AG04449 (cell line): ENCODE measurements at regions of chr2 and their contacts with region 1.

Region 1: GRCh38 chr2:216519154-216519762 is 20.6 kb downstream of the RPL37A start:
- DNase-seq: no peak
- H3K4me3 ChIP-seq: no peak overlapping the region
- CTCF ChIP-seq: peak; percentile 67

Region 2: GRCh38 chr2:216339808-216340631 is 179.2 kb before region 1 on chr2:
- CTCF ChIA-PET with region 1: no interaction called
- POLR2A ChIA-PET with region 1: no interaction called
- DNase-seq: no peak
- H3K4me3 ChIP-seq: no peak overlapping the region
- CTCF ChIP-seq: peak; percentile 36

Region 3: DNA sequence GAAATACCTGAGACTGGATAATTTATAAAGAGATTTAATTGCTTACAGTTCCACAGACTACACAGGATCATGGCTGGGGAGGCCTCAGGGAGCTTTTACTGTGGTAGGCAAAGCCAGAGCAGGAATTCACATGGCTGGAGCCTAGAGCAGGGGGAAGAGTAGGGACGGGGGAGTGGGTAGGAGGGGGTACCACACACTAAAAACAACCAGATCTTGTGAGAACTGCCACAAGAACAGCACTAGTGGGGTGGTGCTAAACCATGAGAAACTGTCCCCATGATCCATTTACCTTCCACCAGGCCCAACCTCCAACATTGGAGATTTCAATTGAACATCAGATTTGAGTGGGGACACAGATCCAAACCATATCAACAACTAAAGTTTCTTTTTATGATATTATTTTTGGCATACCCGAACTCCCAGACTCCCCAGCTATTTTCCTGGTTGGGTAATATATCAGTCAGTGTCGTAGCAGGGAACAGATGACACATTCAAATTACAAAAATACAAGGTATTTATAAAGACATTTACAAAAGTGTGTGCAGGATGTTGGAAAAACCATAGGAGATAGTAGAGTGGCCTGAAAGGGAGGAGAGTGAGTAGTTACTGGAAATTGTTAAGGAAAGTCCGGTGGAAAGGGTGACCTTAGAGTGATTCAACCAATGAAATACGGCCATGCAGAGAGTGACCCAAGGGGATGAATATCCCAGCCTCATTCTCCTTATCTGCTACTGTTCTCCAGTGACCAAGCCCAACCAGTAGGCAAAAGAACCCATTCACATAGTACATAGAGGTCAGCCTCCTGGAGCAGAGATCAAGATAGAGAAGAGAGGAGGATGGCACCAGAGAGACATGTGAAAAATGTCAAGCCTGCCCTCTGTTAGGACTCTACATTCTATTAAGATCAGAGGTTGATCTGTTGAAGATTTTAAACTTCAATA is 11.8 kb before region 1 on chr2:
- CTCF ChIA-PET with region 1: interaction called, 93 read pairs
- POLR2A ChIA-PET with region 1: interaction called, 4 read pairs
- DNase-seq: no peak
- H3K4me3 ChIP-seq: no peak overlapping the region
- CTCF ChIP-seq: no peak

Region 4: GRCh38 chr2:216546641-216547403 is 27.6 kb after region 1 on chr2:
- CTCF ChIA-PET with region 1: interaction called, 11 read pairs
- POLR2A ChIA-PET with region 1: no interaction called
- DNase-seq: no peak
- H3K4me3 ChIP-seq: no peak overlapping the region
- CTCF ChIP-seq: no peak

Region 5: DNA sequence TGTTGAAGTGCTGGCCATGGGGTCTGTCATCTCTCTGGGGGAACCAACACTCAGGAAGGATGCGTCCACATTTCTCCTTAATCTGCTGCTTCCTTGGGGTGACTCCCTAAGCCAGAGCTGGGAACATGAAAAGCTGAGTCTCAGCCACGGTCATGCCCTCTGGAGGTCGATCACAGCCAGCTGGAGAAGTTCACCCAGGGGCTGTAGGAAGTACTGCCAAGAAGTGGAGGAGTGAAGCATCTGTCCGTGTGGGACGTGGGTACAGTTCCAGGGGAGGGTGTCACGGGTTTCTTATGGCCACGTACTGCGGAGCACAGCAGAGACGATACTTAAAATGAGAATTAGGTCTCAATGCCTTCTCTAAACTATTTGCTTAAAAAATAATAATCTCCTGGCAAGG is 71.5 kb after region 1 on chr2:
- CTCF ChIA-PET with region 1: interaction called, 19 read pairs
- POLR2A ChIA-PET with region 1: no interaction called
- DNase-seq: no peak
- H3K4me3 ChIP-seq: no peak overlapping the region
- CTCF ChIP-seq: no peak

Region 6: GRCh38 chr2:216636551-216637450 is 117.5 kb after region 1 on chr2:
- CTCF ChIA-PET with region 1: interaction called, 36 read pairs
- POLR2A ChIA-PET with region 1: no interaction called
- DNase-seq: no peak
- H3K4me3 ChIP-seq: no peak overlapping the region; the same call in 1 of the 2 replicates
- CTCF ChIP-seq: no peak

Region 7: GRCh38 chr2:216680951-216681629 is 161.8 kb after region 1 on chr2:
- CTCF ChIA-PET with region 1: interaction called, 1,277 read pairs
- POLR2A ChIA-PET with region 1: no interaction called
- DNase-seq: no peak
- H3K4me3 ChIP-seq: no peak overlapping the region
- CTCF ChIP-seq: no peak

Region 8: GRCh38 chr2:216897561-216898203 is 378.4 kb after region 1 on chr2:
- CTCF ChIA-PET with region 1: no interaction called
- POLR2A ChIA-PET with region 1: no interaction called
- DNase-seq: no peak
- H3K4me3 ChIP-seq: no peak overlapping the region
- CTCF ChIP-seq: no peak

Region 9: GRCh38 chr2:217108575-217109027 is 589.3 kb after region 1 on chr2:
- CTCF ChIA-PET with region 1: no interaction called
- POLR2A ChIA-PET with region 1: no interaction called
- DNase-seq: no peak
- H3K4me3 ChIP-seq: no peak overlapping the region
- CTCF ChIP-seq: no peak